H1 (cell line): ENCODE measurements at regions of chr11 and their contacts with region 1.

Region 1: DNA sequence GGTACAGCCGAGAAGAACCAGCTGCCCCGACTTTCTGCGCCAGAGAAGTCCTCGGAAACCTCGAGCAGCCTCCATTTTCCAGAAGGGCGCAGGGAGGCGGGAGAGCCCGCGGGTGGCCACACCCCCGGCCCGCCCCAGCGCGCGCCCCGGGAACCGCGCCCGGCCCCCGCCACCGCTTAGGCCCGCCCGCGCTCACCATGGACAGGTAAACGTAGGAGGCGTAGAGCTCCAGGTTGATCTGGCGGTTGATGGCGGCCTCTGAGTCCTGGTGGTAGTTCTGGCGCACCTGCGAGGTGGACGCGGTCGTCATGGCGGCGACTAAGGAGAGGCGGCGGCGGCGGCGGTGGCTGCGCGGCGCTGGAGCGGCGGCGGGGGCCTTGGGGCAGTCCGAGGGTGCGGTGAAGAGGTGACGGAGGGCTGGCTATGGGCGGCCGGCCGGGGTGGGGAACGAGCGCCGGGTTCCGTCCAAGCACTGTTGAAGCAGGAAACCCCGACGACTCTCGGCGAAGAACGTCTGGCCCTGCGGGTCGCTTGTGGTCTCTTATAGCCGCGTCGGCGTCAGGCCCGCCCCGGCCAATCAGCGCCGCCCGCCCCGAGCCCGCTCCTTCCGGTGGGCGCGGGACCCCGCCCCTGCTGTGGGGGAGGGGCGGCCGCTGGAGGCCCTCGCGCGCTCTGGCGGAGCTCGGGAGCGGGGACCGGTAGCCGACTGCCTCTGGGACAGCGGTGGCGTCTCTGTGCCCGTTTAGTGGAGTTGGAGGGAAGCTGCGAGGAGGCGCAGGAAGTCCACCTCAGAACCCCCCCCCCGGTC is at the start of gene FTH1:
- DNase-seq: peak; percentile 56 to 90
- H3K4me3 ChIP-seq: peak within 1 kb of the TSS; percentile 89 to 97 (median 96)
- H3K27ac ChIP-seq: peak within 1 kb of the TSS; percentile 96
- H3K4me1 ChIP-seq: peaks cover 9 to 20% (median 13%) of the 10 kb centered on the region in 4 experiments
- H3K27me3 ChIP-seq: no peaks in the 10 kb centered on the region
- CTCF ChIP-seq: no peak
- EP300 ChIP-seq: peak in 1 of 2 experiments; percentile 57; a peak in 2 of 3 replicates
- POLR2A ChIP-seq: peak; percentile 90 to 96
- RAD21 ChIP-seq: no peak
- total RNA-seq, gene FTH1: 1,461 and 1,535 TPM in 2 replicates

Region 2: GRCh38 chr11:61912530-61912898 is 54.8 kb before region 1 on chr11:
- CTCF ChIA-PET with region 1: no interaction called
- POLR2A ChIA-PET with region 1: interaction called, 16 read pairs
- DNase-seq: no peak
- H3K4me3 ChIP-seq: no peak overlapping the region
- H3K27ac ChIP-seq: no peak overlapping the region
- H3K4me1 ChIP-seq: peaks cover 0 to 21% (median 10%) of the 10 kb centered on the region in 4 experiments; a peak in 6 of 7 replicates
- H3K27me3 ChIP-seq: peaks cover 0 to 9% (median 6%) of the 10 kb centered on the region in 4 experiments; a peak in 4 of 7 replicates
- CTCF ChIP-seq: no peak
- EP300 ChIP-seq: no peak
- POLR2A ChIP-seq: no peak
- RAD21 ChIP-seq: no peak

Region 3: GRCh38 chr11:61985885-61986345 is 18.6 kb after region 1 on chr11:
- CTCF ChIA-PET with region 1: interaction called, 9 read pairs
- POLR2A ChIA-PET with region 1: interaction called, 458 read pairs
- DNase-seq: no peak
- H3K4me3 ChIP-seq: no peak overlapping the region
- H3K27ac ChIP-seq: no peak overlapping the region
- H3K4me1 ChIP-seq: peaks cover 0 to 2% (median 0%) of the 10 kb centered on the region in 4 experiments; a peak in 1 of 7 replicates
- H3K27me3 ChIP-seq: peaks cover 6 to 16% (median 11%) of the 10 kb centered on the region in 4 experiments; a peak in 5 of 7 replicates
- CTCF ChIP-seq: no peak
- EP300 ChIP-seq: no peak
- POLR2A ChIP-seq: no peak
- RAD21 ChIP-seq: no peak

Region 4: GRCh38 chr11:61999141-61999975 is 32.0 kb after region 1 on chr11:
- CTCF ChIA-PET with region 1: interaction called, 7 read pairs
- POLR2A ChIA-PET with region 1: interaction called, 19 read pairs
- DNase-seq: no peak
- H3K4me3 ChIP-seq: peak overlapping the region in 1 of 4 experiments; percentile 22; a peak in 2 of 8 replicates
- H3K27ac ChIP-seq: peak overlapping the region; percentile 92
- H3K4me1 ChIP-seq: peaks cover 0 to 19% (median 6%) of the 10 kb centered on the region in 4 experiments; a peak in 6 of 7 replicates
- H3K27me3 ChIP-seq: no peaks in the 10 kb centered on the region
- CTCF ChIP-seq: no peak
- EP300 ChIP-seq: no peak
- POLR2A ChIP-seq: no peak; a peak in 2 of 3 replicates
- RAD21 ChIP-seq: no peak

Region 5: DNA sequence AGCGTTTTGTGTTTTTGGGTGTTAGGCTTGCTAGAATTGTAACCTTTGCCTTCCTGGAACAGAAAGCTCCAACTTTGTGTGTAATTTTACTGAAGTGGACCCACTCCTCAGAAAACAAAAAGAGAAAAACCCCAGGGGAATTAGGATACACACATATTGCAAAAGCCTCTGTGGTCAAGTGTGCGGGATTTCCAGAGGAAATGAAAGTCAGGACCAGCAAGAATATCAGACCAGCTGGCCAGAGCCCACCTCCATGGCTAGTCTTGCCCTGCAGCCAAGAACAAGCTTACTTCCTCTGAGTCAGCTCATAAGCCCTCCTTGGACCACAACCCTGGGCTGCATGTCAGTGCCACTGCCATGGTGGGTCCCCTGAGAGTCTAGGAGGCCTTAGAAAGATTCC is 37.2 kb after region 1 on chr11:
- CTCF ChIA-PET with region 1: no interaction called
- POLR2A ChIA-PET with region 1: interaction called, 19 read pairs
- DNase-seq: no peak
- H3K4me3 ChIP-seq: no peak overlapping the region
- H3K27ac ChIP-seq: no peak overlapping the region
- H3K4me1 ChIP-seq: peaks cover 3 to 14% (median 5%) of the 10 kb centered on the region in 4 experiments
- H3K27me3 ChIP-seq: no peaks in the 10 kb centered on the region
- CTCF ChIP-seq: no peak
- EP300 ChIP-seq: no peak
- POLR2A ChIP-seq: no peak
- RAD21 ChIP-seq: no peak

Region 6: GRCh38 chr11:62030071-62030684 is 62.9 kb after region 1 on chr11:
- CTCF ChIA-PET with region 1: interaction called, 3 read pairs
- POLR2A ChIA-PET with region 1: interaction called, 12 read pairs
- DNase-seq: peak; percentile 13 to 51
- H3K4me3 ChIP-seq: no peak overlapping the region
- H3K27ac ChIP-seq: no peak overlapping the region
- H3K4me1 ChIP-seq: peaks cover 0 to 3% (median 3%) of the 10 kb centered on the region in 4 experiments; a peak in 3 of 7 replicates
- H3K27me3 ChIP-seq: no peaks in the 10 kb centered on the region; a peak in 1 of 7 replicates
- CTCF ChIP-seq: no peak
- EP300 ChIP-seq: no peak
- POLR2A ChIP-seq: no peak
- RAD21 ChIP-seq: no peak

Region 7: GRCh38 chr11:62048065-62048464 is 80.7 kb after region 1 on chr11:
- CTCF ChIA-PET with region 1: interaction called, 4 read pairs
- POLR2A ChIA-PET with region 1: interaction called, 16 read pairs
- DNase-seq: no peak
- H3K4me3 ChIP-seq: no peak overlapping the region
- H3K27ac ChIP-seq: no peak overlapping the region
- H3K4me1 ChIP-seq: no peaks in the 10 kb centered on the region
- H3K27me3 ChIP-seq: no peaks in the 10 kb centered on the region
- CTCF ChIP-seq: no peak
- EP300 ChIP-seq: no peak
- POLR2A ChIP-seq: no peak
- RAD21 ChIP-seq: no peak